A549 (cell line): ENCODE measurements at regions of chr17 and their contacts with region 1.

Region 1: GRCh38 chr17:55527540-55528118 is 16.4 kb upstream of the SMIM36 start:
- DNase-seq: peak; percentile 50 to 71
- ATAC-seq: peak; percentile 84 to 86
- H3K4me3 ChIP-seq: no peak overlapping the region
- H3K27ac ChIP-seq: no peak overlapping the region; a peak in 1 of 6 replicates
- H3K4me1 ChIP-seq: no peaks in the 10 kb centered on the region
- CTCF ChIP-seq: peak; percentile 96
- EP300 ChIP-seq: no peak
- POLR2A ChIP-seq: no peak
- RAD21 ChIP-seq: peak; percentile 94 to 99

Region 2: GRCh38 chr17:54992797-54993639 is 534.6 kb before region 1 on chr17:
- CTCF ChIA-PET with region 1: interaction called, 11 read pairs
- POLR2A ChIA-PET with region 1: no interaction called
- DNase-seq: peak; percentile 49 to 71
- ATAC-seq: peak; percentile 80 to 90; a peak in 5 of 6 replicates
- H3K4me3 ChIP-seq: no peak overlapping the region
- H3K27ac ChIP-seq: no peak overlapping the region
- H3K4me1 ChIP-seq: no peaks in the 10 kb centered on the region
- CTCF ChIP-seq: peak; percentile 86
- EP300 ChIP-seq: no peak
- POLR2A ChIP-seq: no peak
- RAD21 ChIP-seq: peak; percentile 82 to 86

Region 3: DNA sequence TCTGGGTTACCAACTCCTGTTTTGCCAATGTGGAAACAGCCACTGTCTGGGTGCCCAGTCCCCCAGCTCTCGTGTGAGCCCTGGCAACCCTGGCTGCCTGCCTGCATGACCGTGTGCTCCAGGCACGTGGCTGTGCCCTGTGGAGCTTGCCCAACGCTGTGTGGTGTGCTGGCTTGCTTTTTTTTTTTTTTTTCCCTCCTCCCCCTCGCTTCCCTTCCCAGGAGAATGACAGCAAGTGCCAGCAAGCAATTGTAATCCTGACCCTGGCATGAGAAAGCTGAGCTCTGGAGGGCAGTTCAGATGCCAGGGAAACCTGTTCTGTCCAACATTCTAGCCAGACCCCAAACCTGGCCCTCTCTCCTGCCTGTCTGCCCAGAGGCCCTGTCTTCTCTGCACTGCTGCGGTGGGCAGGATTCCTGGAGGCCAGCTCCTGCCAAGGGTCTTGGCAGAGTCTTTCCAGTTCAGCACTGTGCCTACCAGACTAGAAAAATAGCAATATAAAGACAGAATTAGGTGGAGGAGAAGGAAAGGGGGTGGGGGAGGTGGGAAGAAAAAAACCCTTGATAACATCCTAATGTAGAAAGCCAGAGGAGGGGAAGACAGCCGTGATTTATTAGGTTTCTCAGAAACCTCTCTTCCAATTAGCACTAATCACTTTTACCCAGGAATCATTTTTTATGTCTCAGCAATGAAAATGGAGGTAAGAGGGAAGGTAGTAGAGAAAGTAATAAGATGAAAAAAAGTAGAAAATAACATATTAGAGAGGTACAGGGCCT is 253.9 kb before region 1 on chr17:
- CTCF ChIA-PET with region 1: no interaction called
- POLR2A ChIA-PET with region 1: no interaction called
- DNase-seq: peak in 1 of 2 experiments; percentile 13
- ATAC-seq: peak; percentile 45 to 66; a peak in 5 of 6 replicates
- H3K4me3 ChIP-seq: no peak overlapping the region
- H3K27ac ChIP-seq: peak overlapping the region; percentile 8 to 68; a peak in 3 of 6 replicates
- H3K4me1 ChIP-seq: peaks cover 39% of the 10 kb centered on the region
- CTCF ChIP-seq: no peak
- EP300 ChIP-seq: no peak
- POLR2A ChIP-seq: no peak
- RAD21 ChIP-seq: no peak

Region 4: GRCh38 chr17:55549140-55549539 is 21.5 kb after region 1 on chr17:
- CTCF ChIA-PET with region 1: interaction called, 27 read pairs
- POLR2A ChIA-PET with region 1: no interaction called
- DNase-seq: peak in 1 of 2 experiments; percentile 39
- ATAC-seq: peak in 1 of 2 experiments; percentile 71; a peak in 3 of 6 replicates
- H3K4me3 ChIP-seq: no peak overlapping the region
- H3K27ac ChIP-seq: no peak overlapping the region
- H3K4me1 ChIP-seq: no peaks in the 10 kb centered on the region
- CTCF ChIP-seq: peak; percentile 28; the same call in 1 of the 3 replicates
- EP300 ChIP-seq: no peak
- POLR2A ChIP-seq: no peak
- RAD21 ChIP-seq: peak; percentile 27 to 41; a peak in 4 of 5 replicates

Region 5: DNA sequence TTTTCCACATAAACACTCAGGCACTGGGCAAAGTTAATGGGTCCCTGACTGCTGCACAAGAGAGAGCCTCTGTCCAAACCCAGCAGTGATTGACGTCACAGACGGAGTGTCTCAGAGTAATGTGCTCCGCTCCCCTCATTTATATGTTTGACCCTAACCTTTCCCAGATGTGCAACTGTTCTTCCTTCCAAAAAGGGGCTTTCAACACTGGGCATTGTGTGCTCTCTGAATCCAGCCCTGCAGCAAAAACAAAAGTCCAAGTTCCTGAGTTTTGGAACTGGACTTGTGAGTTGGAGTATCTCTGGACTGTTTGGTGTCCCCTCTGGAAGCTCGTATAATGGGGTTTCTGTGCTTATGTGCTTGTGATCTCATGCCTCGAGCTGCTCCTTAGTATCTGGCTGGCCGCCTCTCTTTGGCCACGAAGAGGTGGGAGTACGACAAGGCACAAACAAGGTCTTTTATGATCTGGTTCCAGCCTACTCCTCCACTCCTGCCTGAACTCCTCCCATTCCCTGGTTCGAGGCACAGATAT is 60.0 kb after region 1 on chr17:
- CTCF ChIA-PET with region 1: interaction called, 14 read pairs
- POLR2A ChIA-PET with region 1: no interaction called
- DNase-seq: no peak
- ATAC-seq: no peak
- H3K4me3 ChIP-seq: no peak overlapping the region
- H3K27ac ChIP-seq: peak overlapping the region in 1 of 2 experiments; percentile 35; a peak in 3 of 6 replicates
- H3K4me1 ChIP-seq: peaks cover 39% of the 10 kb centered on the region
- CTCF ChIP-seq: no peak
- EP300 ChIP-seq: no peak
- POLR2A ChIP-seq: no peak
- RAD21 ChIP-seq: no peak

Region 6: DNA sequence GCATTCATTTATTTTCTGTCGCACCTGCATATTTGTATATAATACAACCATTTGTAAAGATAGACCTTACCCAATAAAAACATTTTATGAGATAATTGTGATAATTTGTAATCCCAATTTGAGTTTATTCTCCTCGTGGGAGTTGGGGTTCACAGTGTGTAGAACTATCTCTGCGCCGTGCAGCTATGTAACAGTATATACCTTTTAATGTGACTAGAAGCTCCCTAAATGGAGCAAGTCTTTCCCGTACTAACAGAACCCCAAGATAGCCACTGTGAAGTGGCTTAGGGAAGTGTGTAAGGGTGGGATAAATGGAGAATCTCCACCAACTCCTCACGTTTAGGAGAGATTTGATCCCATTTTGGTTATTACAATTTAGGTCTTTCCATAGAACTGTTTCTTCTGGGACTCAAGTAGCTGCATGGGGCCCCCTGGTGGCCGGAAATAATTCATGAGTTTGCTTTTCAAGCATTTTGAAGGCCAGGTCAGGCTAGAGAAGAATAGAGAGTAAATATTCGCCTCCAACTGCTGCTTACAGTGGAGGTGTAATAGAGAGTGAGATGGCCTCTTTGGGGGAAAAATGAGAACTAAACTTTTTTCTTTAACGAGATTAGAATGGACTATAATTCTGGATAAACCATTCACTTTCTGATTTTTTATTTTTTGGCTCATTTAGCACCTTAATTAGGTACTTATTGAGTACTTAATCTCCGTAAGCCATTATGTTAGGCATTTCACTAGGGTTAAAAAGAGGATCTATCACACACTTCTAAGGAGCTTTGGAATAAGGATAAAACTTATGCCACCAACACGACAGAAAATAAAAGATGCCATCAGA is 190.5 kb after region 1 on chr17:
- CTCF ChIA-PET with region 1: interaction called, 359 read pairs
- POLR2A ChIA-PET with region 1: no interaction called
- DNase-seq: peak; percentile 39 to 78
- ATAC-seq: peak; percentile 72 to 88
- H3K4me3 ChIP-seq: no peak overlapping the region
- H3K27ac ChIP-seq: no peak overlapping the region
- H3K4me1 ChIP-seq: peaks cover 7% of the 10 kb centered on the region; the same call in 2 of the 3 replicates
- CTCF ChIP-seq: peak; percentile 91
- EP300 ChIP-seq: no peak
- POLR2A ChIP-seq: no peak
- RAD21 ChIP-seq: peak; percentile 71 to 84

Region 7: DNA sequence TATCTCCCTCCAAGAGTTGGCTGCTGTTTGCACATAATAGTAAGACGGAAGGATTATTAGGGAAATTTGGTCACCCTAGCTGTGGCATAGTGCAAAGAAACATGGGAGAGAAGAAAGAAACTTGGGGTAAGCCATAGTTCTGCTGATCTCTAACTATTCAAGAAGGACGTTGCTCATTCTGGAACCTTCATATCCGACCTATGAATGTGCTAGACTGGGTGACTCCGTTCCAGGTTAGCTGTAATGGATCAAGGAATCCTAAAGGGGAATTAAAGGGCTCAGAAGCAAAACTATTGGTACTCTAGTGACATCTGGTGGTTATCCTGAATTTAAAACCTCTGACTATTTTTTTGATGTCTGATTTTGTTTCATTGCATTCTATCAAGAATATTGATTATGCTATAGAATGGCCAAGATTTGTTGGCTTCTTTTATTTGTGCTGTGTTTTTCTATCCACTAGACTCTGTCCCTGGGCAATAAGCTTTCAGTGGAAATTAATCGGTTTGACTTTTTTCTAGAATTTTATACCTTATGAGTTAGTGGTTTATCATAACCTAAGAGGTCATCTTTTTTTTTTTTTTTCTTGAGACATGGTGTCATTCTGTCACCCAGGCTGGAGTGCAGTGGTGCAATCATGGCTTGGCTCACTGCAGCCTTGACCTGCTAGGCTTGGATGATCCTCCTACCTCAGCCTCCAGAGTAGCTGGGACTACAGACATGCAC is 242.7 kb after region 1 on chr17:
- CTCF ChIA-PET with region 1: interaction called, 296 read pairs
- POLR2A ChIA-PET with region 1: no interaction called
- DNase-seq: peak; percentile 64 to 84
- ATAC-seq: peak; percentile 76 to 93; a peak in 5 of 6 replicates
- H3K4me3 ChIP-seq: no peak overlapping the region
- H3K27ac ChIP-seq: peak overlapping the region in 1 of 2 experiments; percentile 12; a peak in 1 of 6 replicates
- H3K4me1 ChIP-seq: peaks cover 9% of the 10 kb centered on the region
- CTCF ChIP-seq: peak; percentile 91
- EP300 ChIP-seq: no peak
- POLR2A ChIP-seq: no peak
- RAD21 ChIP-seq: peak; percentile 82 to 90